ENCODE measurements at regions of chr18 and their contacts with region 1.

Region 1: DNA sequence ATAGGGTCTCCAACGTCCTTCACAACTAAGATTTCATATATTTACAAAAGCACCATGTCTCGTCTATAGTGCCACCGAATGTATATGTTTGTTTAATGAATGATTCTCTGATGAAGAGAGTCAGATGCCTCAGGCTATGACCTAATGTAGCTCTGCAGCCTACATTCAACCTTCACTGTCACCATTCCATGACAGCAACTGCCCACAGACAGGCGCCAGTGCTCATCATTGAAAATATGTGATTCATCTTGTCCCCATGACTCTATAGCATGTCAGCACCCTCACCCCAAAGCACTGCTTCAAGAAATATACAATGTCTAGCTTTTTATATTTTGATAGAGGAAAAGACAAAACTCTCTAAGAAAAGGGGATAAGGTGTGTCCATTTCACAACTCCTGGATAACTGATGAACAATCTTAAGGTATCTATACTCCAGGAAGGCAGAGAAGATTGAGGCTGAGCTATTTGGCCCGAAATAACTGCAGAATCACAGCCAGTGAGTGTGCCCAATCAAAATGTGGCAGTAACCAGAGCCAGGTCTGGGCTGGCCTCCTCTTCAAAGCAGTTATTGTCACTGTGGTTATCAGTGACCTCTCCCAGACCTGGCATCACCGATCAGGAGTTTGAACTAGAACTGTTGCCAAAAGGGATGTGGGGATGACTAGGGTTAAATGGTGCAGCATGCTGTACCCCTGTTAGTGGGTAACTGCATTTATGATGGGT is 246.6 kb downstream of the SETBP1 start:
- DNase-seq: no peak
- CTCF ChIP-seq: no peak

Region 2: DNA sequence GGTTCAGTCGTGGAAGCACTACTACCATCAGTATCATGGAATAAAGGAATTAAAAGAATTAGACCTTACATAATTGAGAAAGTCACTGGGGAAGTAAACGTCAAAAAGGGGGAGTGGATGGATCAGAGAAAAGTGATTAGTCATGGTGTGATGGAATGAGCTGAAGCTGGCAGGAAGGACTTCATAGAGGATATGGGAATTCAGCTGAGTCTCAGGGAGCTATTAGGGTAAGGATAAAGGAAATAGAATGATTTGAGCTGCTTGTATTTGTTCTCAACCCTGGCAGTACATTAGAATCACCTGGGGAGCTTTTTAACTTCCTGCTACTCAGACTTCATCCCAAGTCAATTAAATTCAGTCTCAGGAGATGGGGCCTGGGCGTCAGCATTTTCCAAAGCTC is 300.0 kb before region 1 on chr18:
- CTCF ChIA-PET with region 1: no interaction called
- POLR2A ChIA-PET with region 1: no interaction called
- DNase-seq: no peak
- CTCF ChIP-seq: no peak

Region 3: DNA sequence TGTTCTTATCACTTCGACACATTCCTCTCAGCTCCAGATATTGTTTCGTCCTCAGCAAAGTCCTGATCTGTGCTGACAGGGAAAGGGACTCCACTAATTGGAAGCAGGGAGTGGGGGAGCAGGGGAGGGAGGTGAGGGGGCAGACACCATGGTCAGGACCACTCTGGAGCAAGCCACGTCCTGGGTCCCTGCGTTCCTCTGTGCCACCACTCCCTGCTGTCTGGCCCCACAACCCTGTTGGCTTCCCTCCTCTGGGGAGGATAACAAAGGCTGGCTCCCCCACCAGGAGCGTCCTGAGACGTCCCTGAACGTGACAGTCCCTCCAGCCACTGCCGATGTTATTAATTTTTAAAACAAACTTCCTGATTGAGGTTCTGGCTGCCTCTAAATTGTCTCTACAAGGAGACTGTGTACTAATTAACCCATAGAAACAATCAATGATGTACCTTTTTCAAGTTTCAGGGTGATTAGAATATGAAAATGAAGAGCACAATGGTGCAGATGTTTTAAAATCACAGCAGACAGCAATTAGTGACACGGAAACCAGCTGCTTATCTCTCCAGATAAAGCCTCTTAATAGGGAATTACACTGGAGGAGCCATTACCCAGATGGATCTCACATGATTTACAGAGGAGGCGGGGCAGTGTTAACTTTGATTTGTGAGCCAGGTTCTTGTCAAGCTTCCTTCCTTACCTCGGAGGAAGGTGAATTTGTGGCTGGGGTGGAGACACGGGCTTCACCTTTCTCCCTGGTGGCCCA is 10.9 kb after region 1 on chr18:
- CTCF ChIA-PET with region 1: interaction called, 39 read pairs
- POLR2A ChIA-PET with region 1: no interaction called
- DNase-seq: no peak
- CTCF ChIP-seq: no peak